Activated T-helper 1 cell treated with anti-CD3 and anti-CD28 coated beads, Interleukin-12 subunit alpha, Interleukin-12 subunit beta, Interleukin-2, Interleukin-4 antibody, amounts not matched to agents 30 ng/mL and 10 ng/mL and 1 ng/mL, durations not matched to agents 14 hours and 24 hours and 36 hours (primary cell): ENCODE measurements at regions of chr17 and their contacts with region 1.

Region 1: GRCh38 chr17:62627911-62628633 is 602 bp downstream of the MRC2 start:
- DNase-seq: no peak
- H3K4me3 Mint-ChIP-seq: peak overlapping the region; percentile 77
- H3K27ac Mint-ChIP-seq: no peak overlapping the region
- H3K4me1 Mint-ChIP-seq: peaks cover 10% of the 10 kb centered on the region
- H3K27me3 Mint-ChIP-seq: peaks cover 43% of the 10 kb centered on the region

Region 2: GRCh38 chr17:62653002-62653825 is 25.1 kb after region 1 on chr17:
- intact Hi-C with region 1: loop called (anchors 1 kb)
- DNase-seq: peak; percentile 78
- H3K4me3 Mint-ChIP-seq: peak overlapping the region; percentile 61
- H3K27ac Mint-ChIP-seq: peak overlapping the region; percentile 51
- H3K4me1 Mint-ChIP-seq: peaks cover 21% of the 10 kb centered on the region
- H3K27me3 Mint-ChIP-seq: peaks cover 77% of the 10 kb centered on the region